CD14-positive monocyte (primary cell): ENCODE measurements at regions of chr6 and their contacts with region 1.

Region 1: GRCh38 chr6:156464100-156464878 is 312.9 kb upstream of the ARID1B start:
- DNase-seq: no peak
- H3K4me3 ChIP-seq: no peak overlapping the region
- H3K4me3 Mint-ChIP-seq: no peak overlapping the region
- H3K27ac ChIP-seq: no peak overlapping the region
- H3K27ac Mint-ChIP-seq: no peak overlapping the region
- H3K4me1 ChIP-seq: no peaks in the 10 kb centered on the region
- H3K4me1 Mint-ChIP-seq: peaks cover 3% of the 10 kb centered on the region
- H3K27me3 ChIP-seq: no peaks in the 10 kb centered on the region
- H3K27me3 Mint-ChIP-seq: peaks cover 0 to 6% (median 0%) of the 10 kb centered on the region in 3 donors
- CTCF ChIP-seq: no peak

Region 2: GRCh38 chr6:156425359-156426020 is 38.8 kb before region 1 on chr6:
- intact Hi-C with region 1: loop called in 1 of 2 experiments (anchors 2 kb)
- DNase-seq: no peak
- H3K4me3 ChIP-seq: no peak overlapping the region
- H3K4me3 Mint-ChIP-seq: no peak overlapping the region
- H3K27ac ChIP-seq: no peak overlapping the region
- H3K27ac Mint-ChIP-seq: no peak overlapping the region
- H3K4me1 ChIP-seq: no peaks in the 10 kb centered on the region
- H3K4me1 Mint-ChIP-seq: peaks cover 7% of the 10 kb centered on the region
- H3K27me3 ChIP-seq: no peaks in the 10 kb centered on the region
- H3K27me3 Mint-ChIP-seq: peaks cover 0 to 4% (median 0%) of the 10 kb centered on the region in 3 donors
- CTCF ChIP-seq: no peak